ENCODE measurements at regions of chrX and their contacts with region 1.

Region 1: GRCh38 chrX:40651620-40652223 is 4.4 kb upstream of the CXorf38 start:
- DNase-seq: peak; percentile 72
- H3K4me3 ChIP-seq: no peak overlapping the region
- CTCF ChIP-seq: peak; percentile 62

Region 2: DNA sequence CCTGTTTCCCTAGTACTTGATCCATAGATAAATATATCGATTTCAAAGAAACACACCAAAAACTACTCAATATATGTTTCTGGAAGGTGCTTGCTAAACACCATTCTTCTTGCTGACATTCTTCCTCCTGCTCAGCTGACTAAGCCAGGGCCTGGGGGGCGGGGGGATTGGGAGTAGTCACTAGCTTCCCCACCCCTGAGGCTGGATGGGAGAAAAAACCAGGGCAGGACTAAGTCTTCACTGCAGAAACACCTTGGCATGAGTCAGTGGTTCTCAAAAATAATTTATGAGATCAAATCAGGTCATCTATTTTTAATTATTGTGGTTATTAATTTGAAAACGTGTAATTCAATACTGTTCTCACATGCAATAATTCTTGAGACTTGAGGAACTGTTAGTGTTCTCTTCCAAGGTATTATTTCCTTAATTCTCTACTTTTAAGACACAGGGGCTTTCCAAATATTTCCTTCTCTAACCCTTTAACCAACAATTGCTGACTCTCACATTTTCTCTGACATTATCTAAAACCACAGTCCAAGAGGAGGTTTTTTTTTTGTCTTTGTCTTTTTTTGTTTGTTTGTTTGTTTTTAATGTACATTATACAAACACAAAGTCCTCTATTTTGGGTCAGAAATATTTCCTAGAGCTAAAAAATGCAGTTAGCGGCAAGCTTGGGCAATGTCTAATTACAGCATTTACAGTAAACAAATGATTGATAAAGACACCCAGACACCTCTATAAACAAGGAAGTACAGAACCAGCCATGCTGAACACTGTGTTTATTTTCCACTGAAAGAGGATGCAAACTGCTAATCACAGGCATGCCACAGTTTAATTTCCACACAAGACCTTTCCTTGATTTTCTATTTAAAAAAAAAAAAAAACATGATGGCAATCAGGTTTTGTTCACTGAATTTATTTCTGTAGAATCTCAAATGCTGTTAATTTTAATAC is 313.2 kb after region 1 on chrX:
- in situ Hi-C with region 1: no loop called
- DNase-seq: no peak
- H3K4me3 ChIP-seq: no peak overlapping the region
- CTCF ChIP-seq: no peak

Region 3: DNA sequence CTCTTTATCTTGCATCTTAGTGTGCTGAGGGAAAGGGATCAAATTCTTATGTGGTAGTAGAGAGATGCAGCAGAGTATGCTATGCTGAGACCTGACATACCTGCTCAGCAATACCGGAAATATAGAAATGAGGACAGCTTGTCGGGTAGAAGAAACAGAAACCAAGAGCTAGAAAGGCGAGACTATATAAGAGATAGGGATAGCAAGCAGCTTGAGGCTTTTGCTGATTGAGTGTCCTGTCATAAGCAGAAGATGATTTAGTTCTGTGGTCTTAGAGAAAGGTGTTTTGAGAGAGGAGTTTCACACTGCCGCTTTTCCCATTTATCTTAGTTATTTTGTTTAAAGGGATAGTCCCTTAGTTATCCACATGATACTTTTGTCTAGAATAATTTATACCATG is 465.2 kb after region 1 on chrX:
- in situ Hi-C with region 1: loop called (anchors 25 kb)
- DNase-seq: no peak
- H3K4me3 ChIP-seq: no peak overlapping the region
- CTCF ChIP-seq: no peak

Measured in astrocyte of the spinal cord (primary cell).